ENCODE measurements at regions of chr11 and their contacts with region 1.

Region 1: GRCh38 chr11:64185816-64186498 is at the start of gene STIP1:
- DNase-seq: peak; percentile 95
- ATAC-seq: peak; percentile 92
- H3K4me3 Mint-ChIP-seq: peak within 1 kb of the TSS; percentile 99
- H3K27ac Mint-ChIP-seq: peak within 1 kb of the TSS; percentile 100
- H3K4me1 Mint-ChIP-seq: peaks cover 38% of the 10 kb centered on the region
- H3K27me3 Mint-ChIP-seq: no peaks in the 10 kb centered on the region
- total RNA-seq, gene STIP1: 218 to 219 TPM

Region 2: GRCh38 chr11:64165849-64166635 is 19.9 kb before region 1 on chr11 and contains the start of gene MACROD1:
- POLR2A ChIA-PET with region 1: interaction called, 44 read pairs
- DNase-seq: peak; percentile 86
- ATAC-seq: peak; percentile 94
- H3K4me3 Mint-ChIP-seq: peak within 1 kb of the TSS; percentile 91
- H3K27ac Mint-ChIP-seq: peak within 1 kb of the TSS; percentile 84
- H3K4me1 Mint-ChIP-seq: peaks cover 6% of the 10 kb centered on the region
- H3K27me3 Mint-ChIP-seq: no peaks in the 10 kb centered on the region
- total RNA-seq, gene MACROD1: 13.5 to 16.1 TPM

Region 3: GRCh38 chr11:64204464-64204989 is 18.6 kb after region 1 on chr11:
- POLR2A ChIA-PET with region 1: interaction called, 246 read pairs
- DNase-seq: peak; percentile 76
- ATAC-seq: peak; percentile 39
- H3K4me3 Mint-ChIP-seq: peak overlapping the region; percentile 67
- H3K27ac Mint-ChIP-seq: peak overlapping the region; percentile 87
- H3K4me1 Mint-ChIP-seq: peaks cover 34% of the 10 kb centered on the region
- H3K27me3 Mint-ChIP-seq: no peaks in the 10 kb centered on the region

Region 4: DNA sequence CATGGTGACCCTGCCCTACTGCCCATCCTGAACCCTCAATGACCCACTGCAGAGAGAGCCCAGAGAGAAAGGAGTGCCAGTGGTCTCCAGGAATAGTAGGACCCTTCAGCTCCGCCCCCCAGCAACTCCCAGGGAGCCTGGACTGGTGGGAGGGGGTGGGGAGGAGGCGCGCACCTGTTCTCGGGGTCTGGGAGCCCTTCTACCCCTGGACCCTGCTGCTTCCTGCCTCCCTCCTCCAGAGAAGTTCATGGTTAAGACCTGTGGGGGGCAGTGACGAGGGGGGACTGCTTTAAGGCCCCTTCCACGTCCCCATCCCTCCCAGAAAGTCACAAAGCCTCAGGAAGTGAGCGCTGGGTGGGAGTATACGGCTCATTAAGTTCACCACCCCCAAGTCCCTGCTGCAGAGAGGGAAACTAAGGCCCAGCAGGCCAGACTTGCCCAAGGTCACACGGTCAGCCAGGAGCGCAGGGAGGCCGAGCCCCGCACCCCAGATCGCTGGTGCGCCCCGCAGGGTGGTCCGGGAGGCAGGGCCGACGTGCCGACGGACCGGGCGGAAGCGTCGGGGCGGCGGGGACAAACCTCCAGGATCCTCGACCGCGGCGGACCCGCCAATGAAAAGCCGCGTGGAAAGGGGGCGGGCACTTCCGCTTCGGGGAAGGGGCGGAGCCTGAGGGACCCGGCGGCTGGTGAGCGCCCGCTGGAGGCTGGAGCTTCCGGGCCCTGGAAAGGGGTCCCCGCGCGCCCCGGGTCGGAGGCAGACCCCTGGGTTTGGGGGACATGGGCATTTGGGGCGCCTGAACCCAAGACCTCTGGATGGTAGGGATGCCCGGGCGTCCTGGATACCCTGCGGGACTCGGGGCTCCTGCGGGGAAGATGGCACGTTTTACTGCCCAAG is 39.9 kb after region 1 on chr11 and contains the starts of genes NUDT22 and TRPT1:
- POLR2A ChIA-PET with region 1: interaction called, 45 read pairs
- DNase-seq: peak; percentile 98
- ATAC-seq: peak; percentile 48
- H3K4me3 Mint-ChIP-seq: peak within 1 kb of the TSS; percentile 92
- H3K27ac Mint-ChIP-seq: peak within 1 kb of the TSS; percentile 88
- H3K4me1 Mint-ChIP-seq: peaks cover 24% of the 10 kb centered on the region
- H3K27me3 Mint-ChIP-seq: no peaks in the 10 kb centered on the region
- total RNA-seq, gene NUDT22: 102 to 103 TPM
- total RNA-seq, gene TRPT1: 45.0 to 47.8 TPM

Measured in activated naive CD8-positive, alpha-beta T cell treated with anti-CD3 and anti-CD28 coated beads, Interleukin-2, amount 10 ng/mL, durations not matched to agents 7 days and 5 days (primary cell).